ENCODE measurements at regions of chr3 and their contacts with region 1.

Region 1: GRCh38 chr3:27712136-27713077 is 9.7 kb downstream of the EOMES start:
- DNase-seq: peak; percentile 85 to 96
- ATAC-seq: peak; percentile 94 to 98
- H3K4me3 ChIP-seq: peak overlapping the region; percentile 53
- H3K27ac ChIP-seq: peak overlapping the region; percentile 54 to 77; a peak in 5 of 6 replicates
- H3K4me1 ChIP-seq: peaks cover 17% of the 10 kb centered on the region; the same call in 2 of the 3 replicates
- CTCF ChIP-seq: peak; percentile 79
- EP300 ChIP-seq: no peak
- POLR2A ChIP-seq: no peak
- RAD21 ChIP-seq: peak; percentile 77 to 81

Region 2: DNA sequence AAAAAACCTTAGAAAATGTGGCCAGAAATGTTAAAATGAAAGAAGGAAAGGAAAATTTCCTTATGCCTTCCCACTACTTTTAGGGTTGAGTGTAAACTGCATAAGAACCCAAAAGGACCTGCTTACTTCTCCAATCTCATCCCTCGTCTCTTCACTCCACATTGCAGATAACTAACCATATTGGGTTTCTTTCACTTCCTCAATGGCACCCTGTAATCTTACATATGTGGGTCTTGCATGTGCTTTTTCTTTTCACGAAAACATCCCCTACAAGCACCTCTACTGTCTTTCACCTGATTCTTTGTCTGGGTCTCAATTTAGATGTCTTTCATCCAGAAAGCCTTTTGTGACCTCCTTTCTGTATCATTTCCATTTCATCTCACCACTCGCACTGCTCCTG is 13.3 kb before region 1 on chr3:
- CTCF ChIA-PET with region 1: interaction called, 29 read pairs
- POLR2A ChIA-PET with region 1: interaction called, 3 read pairs
- DNase-seq: no peak
- ATAC-seq: no peak
- H3K4me3 ChIP-seq: no peak overlapping the region
- H3K27ac ChIP-seq: no peak overlapping the region
- H3K4me1 ChIP-seq: peaks cover 7% of the 10 kb centered on the region; the same call in 1 of the 3 replicates
- CTCF ChIP-seq: no peak
- EP300 ChIP-seq: no peak
- POLR2A ChIP-seq: no peak
- RAD21 ChIP-seq: no peak

Region 3: DNA sequence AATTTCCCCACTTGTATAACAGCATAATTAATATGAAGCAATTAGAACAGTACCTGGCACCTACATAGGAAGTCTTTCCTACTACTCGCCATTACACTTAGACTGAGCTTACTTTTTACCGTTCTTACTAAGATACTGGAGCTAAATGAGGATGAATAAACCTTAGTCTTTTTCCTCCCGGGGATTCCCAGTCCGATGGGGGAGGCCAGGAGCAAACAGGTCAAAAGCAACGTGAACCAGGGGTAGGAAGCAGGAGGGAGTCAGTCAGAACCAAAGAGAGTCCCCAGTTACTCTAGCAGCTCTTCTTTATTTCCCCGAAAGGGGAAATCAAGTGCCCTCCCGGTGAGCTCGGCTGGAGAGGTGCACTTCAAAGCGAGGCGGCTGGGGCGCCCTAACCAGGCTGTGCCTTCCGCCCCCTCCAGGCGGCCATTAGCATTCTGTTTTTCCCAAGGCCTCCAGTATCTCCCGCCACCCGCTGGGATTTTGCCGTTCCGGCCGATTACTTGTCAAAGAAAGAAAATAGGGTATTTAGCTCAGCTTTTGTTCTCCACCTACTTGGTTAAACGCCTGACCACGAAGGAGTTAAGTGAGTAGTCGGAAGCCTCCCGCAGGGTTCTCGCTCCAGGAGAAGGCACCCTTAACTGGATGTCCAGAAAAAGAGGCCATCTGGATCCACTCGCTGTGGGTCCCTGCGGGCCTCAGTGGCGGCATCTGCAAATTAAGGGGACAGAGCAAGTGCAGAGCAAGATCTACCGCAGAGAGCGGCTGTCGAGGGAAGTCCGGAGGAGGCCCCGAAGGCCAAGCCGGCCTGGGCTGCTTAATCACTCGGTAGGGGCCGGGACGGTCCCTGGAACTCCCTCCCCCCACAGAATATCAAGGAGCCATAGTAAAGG is 16.0 kb after region 1 on chr3:
- CTCF ChIA-PET with region 1: interaction called, 74 read pairs
- POLR2A ChIA-PET with region 1: no interaction called
- DNase-seq: no peak
- ATAC-seq: peak in 1 of 2 experiments; percentile 52; a peak in 3 of 6 replicates
- H3K4me3 ChIP-seq: no peak overlapping the region
- H3K27ac ChIP-seq: no peak overlapping the region
- H3K4me1 ChIP-seq: no peaks in the 10 kb centered on the region
- CTCF ChIP-seq: no peak
- EP300 ChIP-seq: no peak
- POLR2A ChIP-seq: no peak
- RAD21 ChIP-seq: no peak

Region 4: GRCh38 chr3:27758083-27758482 is 45.7 kb after region 1 on chr3:
- CTCF ChIA-PET with region 1: interaction called, 13 read pairs
- POLR2A ChIA-PET with region 1: no interaction called
- DNase-seq: peak; percentile 48 to 62
- ATAC-seq: peak; percentile 94 to 98
- H3K4me3 ChIP-seq: no peak overlapping the region
- H3K27ac ChIP-seq: peak overlapping the region in 1 of 2 experiments; percentile 49; a peak in 2 of 6 replicates
- H3K4me1 ChIP-seq: peaks cover 20% of the 10 kb centered on the region; the same call in 2 of the 3 replicates
- CTCF ChIP-seq: 0 out of 3 replicates have a peak, but pooled peaks have one; percentile 9
- EP300 ChIP-seq: no peak
- POLR2A ChIP-seq: no peak
- RAD21 ChIP-seq: 0 out of 5 replicates have a peak, but pooled peaks of 1 of the 2 experiments have one; percentile 23

Region 5: DNA sequence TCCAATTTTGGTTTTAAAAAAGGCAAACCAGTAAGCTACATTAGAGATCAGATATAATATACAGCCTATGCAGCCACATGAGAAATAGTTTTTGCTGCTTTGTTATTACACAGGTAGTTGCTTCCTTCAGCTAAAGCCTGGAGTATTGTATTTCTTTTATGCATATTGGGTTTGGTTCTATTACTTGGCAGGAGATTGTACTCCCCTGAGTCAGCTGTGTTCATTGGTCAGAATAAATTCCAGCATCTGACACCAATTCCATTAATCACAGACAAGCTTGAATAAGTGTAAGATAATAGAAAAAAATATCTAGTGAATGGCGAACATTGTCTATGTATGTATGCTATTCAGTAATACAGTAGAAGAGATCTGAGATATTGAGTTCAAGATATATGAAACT is 610.1 kb after region 1 on chr3:
- CTCF ChIA-PET with region 1: interaction called, 63 read pairs
- POLR2A ChIA-PET with region 1: interaction called, 5 read pairs
- DNase-seq: no peak
- ATAC-seq: no peak
- H3K4me3 ChIP-seq: no peak overlapping the region
- H3K27ac ChIP-seq: no peak overlapping the region
- H3K4me1 ChIP-seq: no peaks in the 10 kb centered on the region
- CTCF ChIP-seq: no peak
- EP300 ChIP-seq: no peak
- POLR2A ChIP-seq: no peak
- RAD21 ChIP-seq: no peak

Region 6: DNA sequence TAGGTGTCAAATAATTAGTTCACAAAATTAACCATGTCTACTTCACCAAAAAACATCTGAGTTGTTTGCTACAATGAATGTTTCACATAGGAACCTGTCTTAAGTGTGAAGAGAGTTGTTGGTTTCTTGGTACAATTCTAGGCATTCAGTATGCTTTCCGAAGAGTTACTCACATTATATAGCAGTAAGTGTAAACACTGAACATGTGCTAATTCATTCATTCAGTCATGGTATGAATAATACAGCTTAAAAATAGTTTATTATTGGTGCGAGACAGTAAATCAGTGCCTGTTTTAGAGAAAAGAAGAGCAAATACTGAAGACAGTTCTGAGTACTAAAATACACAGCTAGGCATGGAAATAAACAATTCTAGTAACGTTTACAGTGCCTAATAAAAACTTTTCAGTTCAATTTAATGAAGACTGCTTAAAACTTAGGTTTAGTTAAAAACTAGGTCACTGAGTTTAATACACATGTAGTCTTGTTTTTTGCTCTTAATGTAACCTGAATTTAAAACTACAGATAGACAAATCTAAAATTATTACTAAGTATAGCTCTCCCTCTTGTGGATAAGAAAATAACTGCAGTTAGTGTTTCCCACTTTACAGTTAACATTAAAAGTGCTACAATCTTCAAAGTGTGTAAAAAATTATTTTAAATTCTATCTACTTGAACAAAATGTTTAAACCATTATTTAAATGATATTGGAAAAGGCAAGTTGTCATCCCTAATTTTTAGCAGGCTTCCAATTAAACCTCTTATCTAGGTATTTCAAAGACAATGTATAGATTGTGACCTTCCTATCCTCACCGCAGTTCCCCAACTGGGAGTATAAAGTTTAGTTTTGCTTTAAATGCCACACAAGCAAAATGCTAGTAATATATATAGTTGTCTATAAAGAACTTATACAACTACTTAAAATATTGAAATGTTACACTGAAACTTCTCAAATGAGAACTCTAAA is 616.1 kb after region 1 on chr3:
- CTCF ChIA-PET with region 1: interaction called, 63 read pairs
- POLR2A ChIA-PET with region 1: interaction called, 11 read pairs
- DNase-seq: peak in 1 of 2 experiments; percentile 16
- ATAC-seq: peak in 1 of 2 experiments; percentile 67; a peak in 3 of 6 replicates
- H3K4me3 ChIP-seq: no peak overlapping the region
- H3K27ac ChIP-seq: no peak overlapping the region
- H3K4me1 ChIP-seq: no peaks in the 10 kb centered on the region
- CTCF ChIP-seq: peak; percentile 69
- EP300 ChIP-seq: no peak
- POLR2A ChIP-seq: no peak
- RAD21 ChIP-seq: peak; percentile 65 to 71

Region 7: GRCh38 chr3:28334552-28334951 is 622.1 kb after region 1 on chr3:
- CTCF ChIA-PET with region 1: interaction called, 63 read pairs
- POLR2A ChIA-PET with region 1: interaction called, 6 read pairs
- DNase-seq: no peak
- ATAC-seq: no peak
- H3K4me3 ChIP-seq: no peak overlapping the region
- H3K27ac ChIP-seq: no peak overlapping the region
- H3K4me1 ChIP-seq: no peaks in the 10 kb centered on the region
- CTCF ChIP-seq: peak; percentile 37; the same call in 2 of the 3 replicates
- EP300 ChIP-seq: no peak
- POLR2A ChIP-seq: no peak
- RAD21 ChIP-seq: peak; percentile 27 to 28; a peak in 3 of 5 replicates